ACHN (cell line): ENCODE measurements at regions of chr18 and their contacts with region 1.

Region 1: DNA sequence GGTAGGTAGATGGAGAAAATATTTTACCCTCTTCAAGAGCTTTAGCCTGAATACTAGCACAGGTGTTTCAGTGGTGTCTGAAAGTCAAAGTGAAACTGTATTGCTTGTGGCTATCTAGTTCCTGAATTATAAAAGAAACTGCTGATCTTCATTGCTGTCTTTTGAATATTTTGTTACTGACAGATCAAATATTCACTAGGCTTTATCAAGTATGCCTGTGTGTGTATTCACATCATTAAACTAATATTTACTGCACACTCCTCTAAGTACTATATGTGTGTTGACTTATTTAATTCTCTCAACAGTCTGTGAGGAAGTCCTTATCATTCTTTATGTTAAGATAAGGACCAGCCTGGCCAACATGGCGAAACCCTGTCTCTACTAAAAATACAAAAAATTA is 139.6 kb downstream of the SOCS6 start:
- DNase-seq: no peak

Region 2: DNA sequence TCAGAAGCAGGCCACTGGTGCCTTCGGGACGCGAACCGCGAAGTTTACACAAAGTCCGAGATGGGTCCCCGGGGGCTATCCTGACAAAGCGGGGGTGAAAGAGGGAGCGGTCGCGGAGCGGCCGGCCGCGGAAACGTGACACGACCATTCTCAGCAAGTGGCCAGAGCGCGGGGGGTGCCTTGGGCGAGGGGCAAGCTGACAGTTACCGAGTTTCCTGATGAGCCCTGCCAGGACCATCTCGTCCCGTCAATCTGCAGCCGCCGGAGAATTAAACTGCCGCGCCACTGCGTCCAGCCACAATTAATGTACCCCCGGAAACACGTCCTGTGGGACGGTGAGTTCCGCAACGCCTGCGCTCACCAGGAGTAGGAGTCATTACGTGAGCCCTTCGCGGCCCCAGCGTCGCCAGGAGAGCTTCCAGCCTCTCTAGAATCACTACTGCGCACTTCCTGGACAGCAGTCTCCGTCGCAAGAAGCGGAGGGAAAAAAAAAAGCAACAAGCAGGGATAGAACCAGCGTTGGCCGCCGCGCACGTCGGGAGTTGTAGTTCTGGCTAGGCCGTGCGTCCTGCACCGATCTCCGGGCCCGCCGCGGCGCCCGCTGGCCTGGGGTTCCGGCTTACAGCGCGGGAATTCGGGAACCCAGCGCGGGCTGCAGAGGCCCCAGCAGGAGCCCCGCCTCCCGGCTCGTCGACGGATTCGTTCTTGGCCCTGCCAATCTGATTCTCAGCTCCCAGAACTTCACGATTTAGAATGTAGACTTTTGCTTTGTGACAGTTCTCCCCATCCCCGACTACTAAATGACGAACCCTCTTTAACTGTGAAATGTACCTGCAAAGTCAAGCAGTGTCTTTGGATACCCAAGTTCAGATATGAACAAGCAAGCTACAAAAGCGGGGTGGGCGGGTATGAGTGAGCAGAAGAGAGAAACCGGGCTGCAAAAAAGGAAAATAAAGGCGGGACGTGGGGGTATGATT is 222.7 kb before region 1 on chr18 and contains the start of gene RTTN:
- in situ Hi-C with region 1: loop called (anchors 25 kb)
- DNase-seq: peak; percentile 90

Region 3: GRCh38 chr18:70621710-70622109 is 193.3 kb after region 1 on chr18:
- in situ Hi-C with region 1: no loop called
- DNase-seq: no peak

Region 4: DNA sequence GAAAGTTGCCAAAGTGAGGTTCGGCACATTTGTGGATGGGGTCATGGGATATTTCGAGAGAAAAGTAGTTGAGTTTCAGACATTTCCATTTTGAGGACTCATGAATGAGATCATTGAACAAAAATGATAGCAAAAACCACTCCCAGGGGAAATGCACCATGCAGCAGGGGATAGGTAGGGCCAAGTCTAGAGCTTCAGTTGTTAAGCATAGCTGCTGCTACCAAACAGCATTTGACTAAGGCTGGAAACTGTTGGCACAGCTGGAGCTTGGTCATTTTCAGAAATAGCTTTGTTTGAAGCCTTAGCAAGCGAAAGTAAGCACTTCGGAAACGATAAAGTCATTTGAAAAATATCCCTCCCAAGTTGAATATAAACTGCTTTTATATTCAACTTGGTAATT is 292.2 kb after region 1 on chr18:
- in situ Hi-C with region 1: no loop called
- DNase-seq: no peak